Psoas muscle (tissue), 8 donors: ENCODE measurements at regions of chr11 and their contacts with region 1.

Region 1: DNA sequence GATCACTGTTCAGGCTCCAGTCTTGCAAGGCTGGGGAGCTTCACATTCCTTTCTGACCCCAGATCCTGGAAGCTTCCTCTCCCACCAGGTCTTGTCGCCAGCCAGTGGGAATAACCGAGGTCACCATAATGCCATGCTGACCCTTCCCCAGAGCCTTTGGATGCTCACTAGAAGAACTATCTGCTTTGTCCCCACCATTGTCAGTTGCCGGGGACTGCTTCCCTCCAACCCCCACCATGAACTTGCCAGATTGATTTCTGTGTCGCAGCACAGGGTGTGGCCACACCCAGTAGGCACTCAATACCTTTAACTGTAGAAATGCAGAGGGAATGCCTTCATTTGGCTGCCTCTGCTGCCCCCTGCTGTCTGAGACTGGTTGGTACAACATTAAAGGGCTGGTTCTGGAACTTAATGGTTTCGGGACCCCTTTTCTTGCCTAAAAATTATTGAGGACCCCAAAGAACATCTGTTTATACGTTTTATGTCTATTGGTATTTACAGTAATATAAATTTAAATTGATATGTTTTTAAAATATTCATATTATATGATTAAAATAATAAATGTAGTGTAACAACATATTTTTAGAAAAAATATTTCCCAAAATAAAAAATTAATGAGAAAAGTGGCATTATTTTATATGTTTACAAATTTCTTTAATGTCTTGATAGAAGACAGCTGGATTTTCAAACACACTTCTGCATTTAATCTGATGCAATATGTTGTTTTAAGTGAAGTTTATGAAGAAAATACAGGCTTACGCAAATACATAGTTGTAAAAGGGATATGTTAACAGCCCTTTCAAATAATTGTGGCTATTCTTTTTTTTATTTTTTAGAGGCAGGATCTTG is 6.7 kb upstream of the GDPD5 start:
- DNase-seq: peak; percentile 63 to 74
- ATAC-seq: peak; percentile 75 to 92 (median 90)
- H3K4me3 ChIP-seq: no peak overlapping the region
- H3K27ac ChIP-seq: no peak overlapping the region
- H3K4me1 ChIP-seq: no peaks in the 10 kb centered on the region
- H3K27me3 ChIP-seq: no peaks in the 10 kb centered on the region
- CTCF ChIP-seq: peak; percentile 96

Region 2: GRCh38 chr11:75280227-75280701 is 252.2 kb before region 1 on chr11:
- intact Hi-C with region 1: loop called in 1 of 2 experiments (anchors 5 kb)
- DNase-seq: peak; percentile 66 to 79
- ATAC-seq: peak; percentile 83 to 94 (median 88)
- H3K4me3 ChIP-seq: no peak overlapping the region
- H3K27ac ChIP-seq: no peak overlapping the region
- H3K4me1 ChIP-seq: no peaks in the 10 kb centered on the region
- H3K27me3 ChIP-seq: no peaks in the 10 kb centered on the region
- CTCF ChIP-seq: peak; percentile 99

Region 3: DNA sequence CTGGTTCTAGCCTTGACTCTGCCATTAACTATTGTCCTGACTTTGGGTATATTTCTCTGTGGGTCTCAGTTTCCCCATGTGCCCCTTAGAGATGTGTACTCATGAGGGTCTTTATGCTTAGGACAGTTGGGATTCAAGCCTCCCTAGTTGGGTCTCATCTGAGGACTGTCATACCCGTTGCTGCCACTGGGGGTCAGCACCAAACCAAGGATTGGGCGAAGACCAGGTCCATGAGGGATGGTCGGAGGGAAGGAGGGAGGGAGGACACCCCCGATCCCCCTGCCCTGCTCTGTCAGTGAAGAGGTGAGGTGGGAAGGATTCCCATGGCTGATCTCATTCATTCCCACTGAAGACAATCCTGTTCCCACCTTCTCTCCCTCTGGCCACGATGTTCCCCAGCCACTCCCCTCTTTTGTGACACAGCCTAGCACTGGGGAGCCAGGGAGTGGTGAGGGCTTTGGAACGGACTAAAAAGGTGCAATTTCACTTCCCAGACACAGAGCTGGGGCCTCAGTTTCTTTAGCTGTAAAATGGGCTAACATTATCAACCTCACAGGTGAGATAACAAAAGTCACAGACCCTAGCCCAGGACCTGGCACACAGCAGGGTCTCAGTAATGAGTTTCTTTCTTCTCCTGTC is 87.0 kb before region 1 on chr11:
- intact Hi-C with region 1: loop called (anchors 1 kb)
- DNase-seq: peak; percentile 75 to 84
- ATAC-seq: peak; percentile 83 to 95 (median 87)
- H3K4me3 ChIP-seq: no peak overlapping the region
- H3K27ac ChIP-seq: no peak overlapping the region
- H3K4me1 ChIP-seq: no peaks in the 10 kb centered on the region
- H3K27me3 ChIP-seq: no peaks in the 10 kb centered on the region
- CTCF ChIP-seq: peak; percentile 99

Region 4: GRCh38 chr11:75475767-75476650 is 56.4 kb before region 1 on chr11:
- intact Hi-C with region 1: loop called in 1 of 2 experiments (anchors 2 kb)
- DNase-seq: peak; percentile 70 to 85
- ATAC-seq: peak; percentile 27 to 71 (median 51)
- H3K4me3 ChIP-seq: peak overlapping the region; percentile 7
- H3K27ac ChIP-seq: peak overlapping the region; percentile 86
- H3K4me1 ChIP-seq: peaks cover 44% of the 10 kb centered on the region
- H3K27me3 ChIP-seq: no peaks in the 10 kb centered on the region
- CTCF ChIP-seq: no peak